Left colon (tissue), 2 donors: ENCODE measurements at regions of chr7 and their contacts with region 1.

Region 1: DNA sequence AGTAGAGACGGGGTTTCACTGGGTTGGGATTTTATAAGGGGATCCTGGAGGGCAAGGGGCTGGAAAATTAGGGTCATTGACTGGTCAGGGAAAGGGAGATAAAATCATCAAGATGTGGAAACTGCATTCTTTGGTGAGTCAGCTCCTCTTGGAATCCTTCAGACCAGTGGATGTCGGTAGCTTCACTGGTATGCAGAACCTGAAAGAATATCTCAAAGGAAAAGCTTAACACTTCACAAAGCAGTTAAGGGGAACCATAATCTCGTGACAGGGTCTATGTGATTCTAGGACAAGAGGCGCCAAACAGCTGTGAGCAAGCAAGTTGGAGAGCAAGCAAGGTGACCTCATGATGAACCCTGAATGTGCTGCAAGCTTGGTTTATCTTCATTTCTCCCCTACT is 634.7 kb upstream of the AUTS2 start:
- DNase-seq: no peak
- ATAC-seq: no peak

Region 2: DNA sequence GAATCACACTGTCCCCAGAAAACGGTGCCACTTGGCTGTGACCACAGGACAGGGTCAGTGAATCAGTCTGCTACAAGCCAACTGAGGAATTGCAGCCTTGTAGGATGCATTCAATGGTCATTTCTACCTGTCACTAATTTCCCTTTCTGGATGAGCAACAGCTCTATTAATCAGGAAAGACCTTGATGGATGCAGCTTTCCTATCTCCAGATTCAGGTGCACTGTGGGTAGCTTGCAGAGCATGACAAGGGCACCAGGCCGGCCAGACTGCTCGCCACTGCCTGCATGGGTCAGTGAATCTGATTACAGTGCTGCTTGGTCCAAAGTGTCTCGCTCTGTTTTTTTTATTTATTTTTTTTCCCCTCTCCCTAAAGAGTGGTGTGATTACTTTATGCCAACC is 128.0 kb after region 1 on chr7:
- intact Hi-C with region 1: no loop called
- DNase-seq: no peak
- ATAC-seq: no peak

Region 3: DNA sequence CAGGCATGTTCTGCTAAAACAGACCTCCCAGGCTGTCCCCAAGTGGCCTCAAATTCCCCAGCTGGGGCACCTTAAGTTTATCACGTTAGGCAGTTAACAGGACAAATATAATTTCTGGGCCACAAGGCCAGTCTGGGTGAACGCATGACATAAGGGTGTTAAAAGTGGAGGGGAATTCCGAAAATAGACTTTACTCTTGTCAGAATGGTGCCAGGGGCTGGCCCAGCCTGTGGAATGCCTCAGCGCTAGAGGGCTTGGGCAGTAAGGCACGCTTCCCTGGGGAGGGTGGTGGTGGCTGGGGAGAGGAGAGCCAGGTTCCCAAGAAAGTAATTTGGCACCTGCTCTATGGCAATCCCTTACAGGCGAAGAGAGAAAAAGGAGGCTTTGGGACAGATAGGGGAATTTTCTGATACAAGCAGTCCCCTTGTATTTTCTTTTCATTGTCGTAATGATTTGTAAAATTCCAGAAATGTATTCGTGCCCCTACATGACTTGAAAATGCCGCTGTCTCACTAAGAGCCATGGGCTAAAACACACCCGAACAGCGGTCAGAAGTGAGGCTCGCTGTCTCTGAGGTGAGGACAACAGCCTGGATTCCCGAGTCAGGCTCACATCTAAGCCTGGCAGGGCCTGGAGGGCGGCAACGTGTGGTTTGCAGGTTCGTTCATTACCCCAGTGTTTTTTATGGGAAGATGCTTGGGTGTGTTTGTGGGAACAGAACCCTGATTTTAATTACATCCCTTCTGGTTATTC is 1705.2 kb after region 1 on chr7:
- intact Hi-C with region 1: loop called in 1 of 2 experiments (anchors 10 kb)
- DNase-seq: no peak
- ATAC-seq: peak; percentile 59